IMR-90 (cell line): ENCODE measurements at regions of chr2 and their contacts with region 1.

Region 1: DNA sequence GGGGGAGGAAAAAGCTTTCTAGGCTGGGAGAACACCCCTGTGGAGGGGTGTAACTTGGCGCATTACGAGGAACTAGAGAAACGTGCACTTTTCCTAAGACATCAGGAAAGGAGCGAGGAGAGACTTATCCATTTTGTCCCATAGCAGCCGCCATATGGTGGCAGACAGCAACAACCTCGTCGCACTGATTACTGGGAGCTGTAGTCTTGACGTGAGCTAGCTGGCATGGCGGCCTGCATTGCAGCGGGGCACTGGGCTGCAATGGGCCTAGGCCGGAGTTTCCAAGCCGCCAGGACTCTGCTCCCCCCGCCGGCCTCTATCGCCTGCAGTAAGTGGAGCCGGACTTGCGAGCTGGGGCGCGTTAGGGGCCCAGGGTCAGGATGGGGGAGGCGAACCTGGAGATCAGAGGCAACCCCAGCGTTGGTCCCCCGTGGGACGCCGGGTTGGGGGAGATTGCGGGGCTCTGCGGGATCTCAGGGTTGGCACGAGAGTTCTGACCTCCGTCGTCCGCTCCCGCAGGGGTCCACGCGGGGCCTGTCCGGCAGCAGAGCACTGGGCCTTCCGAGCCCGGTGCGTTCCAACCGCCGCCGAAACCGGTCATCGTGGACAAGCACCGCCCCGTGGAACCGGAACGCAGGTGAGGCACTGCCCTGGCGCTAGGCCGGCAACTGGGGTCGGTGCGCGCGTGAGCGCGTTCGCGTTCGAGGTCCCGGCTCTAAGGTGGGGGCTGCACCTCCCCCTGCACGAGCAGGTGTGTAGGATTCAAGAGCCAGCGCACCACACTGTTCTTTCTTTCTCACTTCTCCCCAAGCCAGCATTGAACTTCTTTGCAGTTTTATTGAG is at the start of gene MRPL19:
- DNase-seq: peak; percentile 93
- ATAC-seq: peak; percentile 99
- H3K4me3 ChIP-seq: peak within 1 kb of the TSS; percentile 66
- H3K27ac ChIP-seq: peak within 1 kb of the TSS; percentile 67
- H3K4me1 ChIP-seq: no peaks in the 10 kb centered on the region
- H3K27me3 ChIP-seq: no peaks in the 10 kb centered on the region
- CTCF ChIP-seq: no peak
- POLR2A ChIP-seq: peak; percentile 33; the same call in 1 of the 2 replicates
- RAD21 ChIP-seq: no peak
- total RNA-seq, gene MRPL19: 28.5 and 48.0 TPM in 2 replicates

Region 2: GRCh38 chr2:75710577-75711253 is 63.9 kb after region 1 on chr2 and contains the start of gene GCFC2:
- CTCF ChIA-PET with region 1: interaction called, 3 read pairs
- POLR2A ChIA-PET with region 1: no interaction called
- dilution Hi-C with region 1: no loop called
- in situ Hi-C with region 1: no loop called
- intact Hi-C with region 1: loop called (anchors 1 kb)
- DNase-seq: peak; percentile 84
- ATAC-seq: peak; percentile 94
- H3K4me3 ChIP-seq: peak within 1 kb of the TSS; percentile 49
- H3K27ac ChIP-seq: peak within 1 kb of the TSS; percentile 85
- H3K4me1 ChIP-seq: peaks cover 2% of the 10 kb centered on the region; the same call in 1 of the 2 replicates
- H3K27me3 ChIP-seq: no peaks in the 10 kb centered on the region; the same call in 1 of the 2 replicates
- CTCF ChIP-seq: peak; percentile 39; the same call in 1 of the 2 replicates
- POLR2A ChIP-seq: peak; percentile 82
- RAD21 ChIP-seq: no peak
- total RNA-seq, gene GCFC2: 10.0 and 13.9 TPM in 2 replicates